ENCODE measurements at regions of chr7 and their contacts with region 1.

Region 1: DNA sequence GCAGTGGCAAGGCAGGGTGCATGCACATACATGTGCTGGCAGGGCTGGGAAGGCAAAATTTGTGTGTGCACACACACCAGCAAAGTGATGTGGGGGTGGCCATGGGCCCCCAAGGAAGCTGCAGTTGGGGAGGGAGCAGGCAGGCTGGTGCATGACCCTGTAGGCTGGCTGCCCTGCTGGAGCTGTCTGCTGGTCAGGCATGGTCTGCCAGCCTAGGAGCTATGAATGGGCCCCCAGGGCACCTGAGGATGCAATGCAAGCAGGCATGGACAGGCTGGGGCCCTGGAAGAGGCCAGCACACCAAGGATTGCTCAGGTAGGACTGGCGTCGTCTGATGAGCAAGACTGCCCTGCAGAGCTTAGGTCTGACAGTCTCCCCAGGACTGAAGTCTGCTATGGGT is 18.2 kb upstream of the PPP1R3A start:
- DNase-seq: no peak

Region 2: DNA sequence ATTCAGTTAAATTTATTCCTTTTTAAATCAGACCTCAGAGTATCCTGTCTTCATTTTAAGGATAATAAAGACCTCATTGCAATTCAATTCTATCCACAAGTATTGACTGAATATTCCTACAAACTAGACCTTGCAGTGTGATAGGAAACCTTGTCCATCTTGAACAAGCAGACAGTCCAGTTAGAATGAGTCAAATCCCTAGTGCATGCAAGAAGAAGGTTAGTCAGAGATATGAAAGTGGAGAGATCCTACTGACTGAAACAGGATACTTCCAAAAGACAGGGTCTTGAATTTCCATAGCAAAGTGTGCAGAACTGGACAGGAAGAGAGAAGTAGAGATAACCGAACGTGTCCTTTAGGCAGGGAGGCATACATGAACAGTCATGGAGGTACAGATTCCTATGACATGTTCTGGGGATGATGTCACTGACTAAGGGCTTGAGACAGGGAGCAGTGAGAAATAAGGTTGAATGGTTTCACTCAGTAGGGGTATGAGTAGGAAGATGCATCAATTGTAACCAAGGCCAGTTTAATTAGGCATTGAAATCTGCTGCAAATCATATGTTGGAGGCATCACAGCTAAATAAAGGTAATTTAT is 63.3 kb before region 1 on chr7:
- intact Hi-C with region 1: loop called (anchors 10 kb)
- DNase-seq: no peak